ENCODE measurements at regions of chr4 and their contacts with region 1.

Region 1: DNA sequence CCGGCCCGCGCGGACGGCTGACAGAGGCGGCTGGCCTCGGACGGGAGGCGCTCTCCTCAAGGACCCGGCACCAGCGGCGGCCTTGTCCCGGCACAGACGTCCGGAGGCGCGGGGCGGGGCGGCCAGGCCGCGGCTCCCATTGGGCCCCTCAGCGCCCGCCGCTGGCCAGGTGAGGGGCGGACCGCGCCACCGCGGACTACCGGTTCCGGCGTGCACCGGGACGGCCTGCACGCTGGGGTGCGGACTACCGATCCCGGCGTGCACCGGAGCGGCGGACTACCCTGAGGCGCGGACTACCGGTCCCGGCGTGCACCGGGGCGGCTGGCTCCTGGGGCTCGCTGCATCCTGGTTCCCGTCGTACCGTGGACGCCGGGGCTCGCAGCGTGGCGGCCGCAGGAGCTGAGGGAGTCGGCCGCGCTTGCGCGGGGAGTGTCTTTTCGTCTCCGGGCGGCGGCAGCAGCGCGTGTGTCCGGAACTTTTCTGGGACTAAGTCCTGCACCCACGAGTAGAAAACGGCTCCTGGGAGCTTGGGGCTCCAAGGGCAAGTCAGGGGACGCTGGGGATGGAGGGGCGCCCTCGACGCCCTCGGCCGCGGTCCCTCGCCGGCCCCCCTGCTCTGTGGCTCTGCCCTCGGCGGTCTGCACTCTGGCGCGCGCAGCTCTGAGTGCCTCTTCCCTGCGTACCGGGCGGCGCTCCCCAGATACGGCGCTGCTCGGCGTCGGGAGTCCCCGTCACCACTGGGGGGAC is at the start of gene LETM1:
- DNase-seq: peak; percentile 96
- H3K4me3 Mint-ChIP-seq: peak within 1 kb of the TSS; percentile 79
- H3K27ac Mint-ChIP-seq: peak within 1 kb of the TSS; percentile 49
- H3K4me1 Mint-ChIP-seq: peaks cover 32% of the 10 kb centered on the region
- H3K27me3 Mint-ChIP-seq: no peaks in the 10 kb centered on the region
- total RNA-seq, gene LETM1: 41.1 to 42.6 TPM

Region 2: DNA sequence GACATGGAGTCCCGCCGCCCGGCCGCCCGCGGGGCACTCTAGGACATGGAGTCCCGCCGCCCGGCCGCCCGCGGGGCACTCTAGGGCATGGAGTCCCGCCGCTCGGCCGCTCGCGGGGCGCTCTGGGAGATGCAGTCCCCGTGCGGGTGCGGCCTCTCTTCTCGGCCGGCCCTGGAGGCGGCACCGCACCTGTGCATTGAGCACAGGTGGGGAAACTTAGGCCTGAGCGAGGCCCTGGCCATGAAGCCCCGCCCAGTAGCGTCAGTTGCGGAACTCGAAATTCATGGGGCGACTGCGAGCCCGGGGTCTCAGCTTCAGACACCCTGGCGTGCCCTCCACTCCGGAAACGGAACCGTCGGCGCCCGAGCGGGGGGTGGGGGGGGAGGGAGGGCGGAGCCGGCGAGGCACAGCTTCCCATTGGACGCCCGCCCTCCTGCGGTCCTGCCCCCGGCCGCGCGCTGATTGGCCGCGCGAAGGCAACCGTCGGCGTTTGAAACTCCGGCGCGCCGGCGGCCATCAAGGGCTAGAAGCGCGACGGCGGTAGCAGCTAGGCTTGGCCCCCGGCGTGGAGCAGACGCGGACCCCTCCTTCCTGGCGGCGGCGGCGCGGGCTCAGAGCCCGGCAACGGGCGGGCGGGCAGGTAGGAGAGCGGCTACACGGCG is 135.1 kb before region 1 on chr4 and contains the starts of genes TACC3 and TMEM129:
- CTCF ChIA-PET with region 1: no interaction called
- POLR2A ChIA-PET with region 1: interaction called, 4 read pairs
- intact Hi-C with region 1: loop called (anchors 5 kb)
- DNase-seq: peak; percentile 97
- H3K4me3 Mint-ChIP-seq: peak within 1 kb of the TSS; percentile 89
- H3K27ac Mint-ChIP-seq: peak within 1 kb of the TSS; percentile 99
- H3K4me1 Mint-ChIP-seq: peaks cover 52% of the 10 kb centered on the region
- H3K27me3 Mint-ChIP-seq: no peaks in the 10 kb centered on the region
- total RNA-seq, gene TACC3: 194 to 201 TPM
- total RNA-seq, gene TMEM129: 16.2 to 18.1 TPM

Measured in activated CD4-positive, alpha-beta memory T cell treated with anti-CD3 and anti-CD28 coated beads for 36 hours (primary cell).